Activated naive CD4-positive, alpha-beta T cell treated with anti-CD3 and anti-CD28 coated beads for 36 hours (primary cell): ENCODE measurements at regions of chr4 and their contacts with region 1.

Region 1: GRCh38 chr4:20684852-20685763 is 15.2 kb upstream of the PACRGL start:
- DNase-seq: no peak
- H3K4me3 Mint-ChIP-seq: no peak overlapping the region
- H3K27ac Mint-ChIP-seq: no peak overlapping the region
- H3K4me1 Mint-ChIP-seq: no peaks in the 10 kb centered on the region
- H3K27me3 Mint-ChIP-seq: peaks cover 18% of the 10 kb centered on the region

Region 2: DNA sequence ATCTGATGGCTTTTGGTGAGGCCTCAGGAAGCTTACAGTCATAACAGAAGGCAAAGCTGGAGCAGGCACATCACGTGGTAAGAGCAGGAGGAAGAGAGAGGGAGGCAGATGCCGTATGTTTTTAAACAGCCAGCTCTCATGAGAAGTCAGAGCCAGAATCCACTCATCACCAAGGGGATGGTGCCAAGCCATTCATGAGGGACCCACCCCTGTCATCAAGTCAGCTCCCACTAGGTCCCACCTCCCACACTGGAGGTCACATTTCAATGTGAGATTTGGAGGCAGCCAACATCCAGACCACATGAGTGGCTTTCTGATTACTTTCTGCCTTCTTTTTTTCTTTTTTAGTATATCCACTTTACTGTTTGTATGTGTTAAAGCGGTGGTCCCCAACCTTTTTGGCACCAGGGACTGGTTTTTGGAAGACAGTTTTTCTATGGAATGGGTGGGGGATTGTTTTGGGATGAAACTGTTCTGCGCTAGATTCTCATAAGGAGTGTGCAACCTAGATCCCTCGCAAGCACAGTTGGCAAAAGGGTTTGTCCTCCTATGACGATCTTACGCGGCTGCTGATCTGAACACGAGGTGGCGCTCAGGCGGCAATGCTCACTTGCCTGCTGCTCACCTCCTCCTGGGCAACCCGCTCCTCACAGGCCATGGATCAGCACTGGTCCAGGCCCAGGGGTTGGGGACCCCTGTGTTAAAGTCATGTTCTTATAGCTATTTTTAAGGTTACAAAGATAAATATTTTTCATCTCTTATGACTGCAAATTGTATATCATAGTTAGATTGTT is 371.7 kb before region 1 on chr4:
- CTCF ChIA-PET with region 1: no interaction called
- intact Hi-C with region 1: loop called (anchors 10 kb)
- DNase-seq: peak; percentile 9
- H3K4me3 Mint-ChIP-seq: no peak overlapping the region
- H3K27ac Mint-ChIP-seq: no peak overlapping the region
- H3K4me1 Mint-ChIP-seq: no peaks in the 10 kb centered on the region
- H3K27me3 Mint-ChIP-seq: no peaks in the 10 kb centered on the region

Region 3: DNA sequence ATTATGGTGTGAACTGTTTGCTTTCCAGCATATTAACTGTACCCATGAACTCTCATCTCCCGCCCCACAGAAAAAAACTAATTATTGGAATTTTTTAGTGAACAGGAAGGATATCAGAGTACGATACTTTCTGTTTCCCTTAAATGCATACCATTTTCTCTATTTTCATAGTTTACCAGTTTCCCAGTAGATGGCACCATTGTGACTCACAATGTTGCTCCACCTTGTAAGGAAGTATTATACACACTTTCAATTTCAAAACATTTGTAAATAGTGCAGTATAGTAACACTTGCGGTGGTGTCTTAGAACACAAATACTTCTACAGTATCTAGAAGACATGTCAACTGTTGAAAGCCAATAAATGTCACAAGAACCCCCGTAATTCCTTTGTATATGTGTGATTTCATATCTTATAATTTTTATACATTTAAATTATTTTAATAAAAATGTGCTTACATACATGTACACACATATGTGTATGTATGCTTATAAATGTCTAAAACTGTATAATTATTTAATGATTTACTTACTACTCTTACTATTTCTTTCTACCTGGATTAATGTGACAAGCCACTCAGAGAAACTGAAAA is 266.2 kb before region 1 on chr4:
- CTCF ChIA-PET with region 1: interaction called, 8 read pairs
- intact Hi-C with region 1: loop called (anchors 1 kb)
- DNase-seq: peak; percentile 11
- H3K4me3 Mint-ChIP-seq: peak overlapping the region; percentile 20
- H3K27ac Mint-ChIP-seq: no peak overlapping the region
- H3K4me1 Mint-ChIP-seq: peaks cover 4% of the 10 kb centered on the region
- H3K27me3 Mint-ChIP-seq: no peaks in the 10 kb centered on the region

Region 4: DNA sequence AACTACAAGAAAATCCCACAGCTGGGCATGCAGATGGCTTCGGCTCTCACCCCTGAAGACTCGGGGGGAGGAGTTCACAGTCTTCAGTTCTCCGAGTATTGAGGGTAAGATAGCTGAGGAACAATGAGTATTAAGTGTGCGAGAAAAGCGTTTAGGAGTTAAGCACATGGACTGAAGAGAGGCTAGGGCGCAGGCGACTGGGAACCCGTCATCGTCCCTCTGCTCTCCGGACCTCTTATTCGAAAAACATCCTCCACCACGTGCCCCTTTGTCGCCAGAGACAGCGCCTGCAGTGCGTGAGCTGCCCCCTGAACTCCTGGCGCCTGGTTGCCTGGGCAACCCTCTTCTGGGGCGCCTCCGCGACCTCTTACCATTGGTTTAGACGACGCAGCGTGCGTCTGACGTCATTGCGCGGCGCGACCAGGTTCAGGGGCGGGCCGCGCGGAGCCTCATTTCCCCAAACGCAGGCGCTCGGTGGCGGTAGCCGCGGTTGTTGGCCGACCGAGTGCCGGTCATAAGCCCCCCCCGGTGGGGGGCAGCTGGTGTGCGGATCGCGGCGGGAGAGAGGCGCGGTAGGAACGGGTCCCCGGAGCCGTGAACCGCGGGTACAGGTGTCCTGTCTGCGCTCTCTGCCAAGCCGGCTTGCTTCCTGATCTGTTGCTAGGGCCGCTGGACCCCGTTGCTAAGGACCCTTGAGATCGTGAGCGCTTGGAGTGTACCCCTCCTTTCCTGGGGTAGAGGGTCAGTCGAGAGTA is 15.1 kb after region 1 on chr4 and contains the start of gene PACRGL:
- CTCF ChIA-PET with region 1: interaction called, 12 read pairs
- intact Hi-C with region 1: no loop called
- DNase-seq: peak; percentile 93
- H3K4me3 Mint-ChIP-seq: peak within 1 kb of the TSS; percentile 89
- H3K27ac Mint-ChIP-seq: peak within 1 kb of the TSS; percentile 85
- H3K4me1 Mint-ChIP-seq: peaks cover 30% of the 10 kb centered on the region
- H3K27me3 Mint-ChIP-seq: no peaks in the 10 kb centered on the region
- total RNA-seq, gene PACRGL: 13.0 to 13.1 TPM

Region 5: DNA sequence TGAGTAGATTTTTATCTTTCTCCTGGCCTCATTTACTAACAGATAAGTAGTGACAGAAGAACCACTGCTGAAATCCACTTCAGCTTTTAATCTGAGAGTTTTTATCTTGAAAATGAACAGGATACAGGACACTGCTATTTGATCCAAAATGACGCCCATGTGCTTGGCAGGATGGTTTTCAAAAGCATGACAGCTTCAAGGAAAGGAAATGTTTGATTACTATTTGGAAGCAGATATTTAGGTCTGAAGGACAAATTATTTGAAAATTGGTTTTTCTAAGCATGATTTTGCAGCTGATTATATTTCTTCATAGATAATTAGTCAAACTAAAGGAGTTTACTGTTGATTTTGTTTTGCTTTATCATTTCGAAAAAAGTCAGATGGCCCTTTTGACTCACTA is 26.2 kb after region 1 on chr4:
- CTCF ChIA-PET with region 1: no interaction called
- intact Hi-C with region 1: no loop called
- DNase-seq: no peak
- H3K4me3 Mint-ChIP-seq: no peak overlapping the region
- H3K27ac Mint-ChIP-seq: no peak overlapping the region
- H3K4me1 Mint-ChIP-seq: no peaks in the 10 kb centered on the region
- H3K27me3 Mint-ChIP-seq: no peaks in the 10 kb centered on the region

Region 6: DNA sequence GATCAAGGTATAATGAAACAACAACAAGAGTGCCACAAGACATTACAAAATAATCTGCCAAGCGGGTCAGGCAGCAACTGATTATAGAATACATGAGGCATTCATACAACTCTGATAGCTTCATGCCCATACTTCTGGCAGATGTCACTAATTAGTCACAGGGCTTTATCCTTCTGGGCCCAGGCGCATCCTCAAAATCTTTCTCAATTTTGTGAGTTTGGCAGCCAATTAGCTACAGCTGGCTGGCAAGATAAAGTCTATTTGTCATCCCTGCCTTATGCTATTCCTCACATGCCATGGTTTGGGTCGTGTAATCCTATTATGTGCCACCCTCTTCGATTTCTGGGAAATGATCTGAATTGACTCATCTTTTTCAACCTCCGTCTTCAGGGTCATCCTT is 269.4 kb after region 1 on chr4:
- CTCF ChIA-PET with region 1: no interaction called
- intact Hi-C with region 1: no loop called
- DNase-seq: no peak
- H3K4me3 Mint-ChIP-seq: no peak overlapping the region
- H3K27ac Mint-ChIP-seq: no peak overlapping the region
- H3K4me1 Mint-ChIP-seq: no peaks in the 10 kb centered on the region
- H3K27me3 Mint-ChIP-seq: no peaks in the 10 kb centered on the region

Region 7: GRCh38 chr4:21242163-21242562 is 557.1 kb after region 1 on chr4:
- CTCF ChIA-PET with region 1: no interaction called
- intact Hi-C with region 1: no loop called
- DNase-seq: no peak
- H3K4me3 Mint-ChIP-seq: no peak overlapping the region
- H3K27ac Mint-ChIP-seq: no peak overlapping the region
- H3K4me1 Mint-ChIP-seq: no peaks in the 10 kb centered on the region
- H3K27me3 Mint-ChIP-seq: no peaks in the 10 kb centered on the region